Activated naive CD4-positive, alpha-beta T cell treated with anti-CD3 and anti-CD28 coated beads for 36 hours (primary cell): ENCODE measurements at regions of chr17 and their contacts with region 1.

Region 1: DNA sequence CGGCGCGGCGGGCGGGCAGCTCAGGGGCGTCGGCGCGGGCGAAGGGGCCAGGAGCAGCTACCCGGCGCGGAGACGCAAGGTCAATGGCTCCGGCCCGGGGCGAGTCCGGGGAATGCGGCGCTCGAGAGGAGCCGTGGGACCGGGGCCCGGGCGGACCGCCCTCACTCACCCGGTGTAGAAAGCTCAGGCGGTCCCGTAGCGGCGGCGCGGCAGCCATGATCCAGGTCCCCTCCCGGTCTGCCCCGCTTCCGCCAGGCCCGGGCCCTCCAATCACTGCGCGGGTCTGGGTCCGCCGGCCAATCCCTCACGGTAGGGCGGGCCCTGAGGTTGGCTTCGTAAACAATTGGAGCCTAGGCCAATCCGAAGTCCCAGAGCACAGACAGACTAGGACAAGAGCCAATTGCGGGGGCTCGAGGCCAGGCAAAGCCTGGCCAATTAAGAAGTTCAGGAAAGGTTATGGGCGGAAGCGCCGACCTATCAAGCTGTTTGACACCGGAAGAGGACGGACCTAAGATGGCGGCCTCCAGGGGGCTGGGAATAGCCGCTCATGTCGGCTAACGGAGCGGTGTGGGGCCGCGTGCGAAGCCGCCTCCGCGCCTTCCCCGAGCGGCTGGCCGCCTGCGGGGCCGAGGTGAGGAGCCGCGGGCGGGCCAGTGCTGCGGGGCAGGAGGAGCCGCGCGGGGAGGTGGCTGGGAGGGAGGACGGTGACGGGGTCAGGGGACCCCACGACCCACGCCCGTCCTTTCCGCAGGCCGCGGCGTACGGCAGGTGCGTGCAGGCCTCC is at the starts of genes NDUFAF8 and TEPSIN:
- DNase-seq: peak; percentile 98
- H3K4me3 Mint-ChIP-seq: peak within 1 kb of the TSS; percentile 90
- H3K27ac Mint-ChIP-seq: peak within 1 kb of the TSS; percentile 96
- H3K4me1 Mint-ChIP-seq: peaks cover 37% of the 10 kb centered on the region
- H3K27me3 Mint-ChIP-seq: no peaks in the 10 kb centered on the region
- total RNA-seq, gene NDUFAF8: 75.7 to 77.0 TPM
- total RNA-seq, gene TEPSIN: 21.7 to 25.9 TPM

Region 2: DNA sequence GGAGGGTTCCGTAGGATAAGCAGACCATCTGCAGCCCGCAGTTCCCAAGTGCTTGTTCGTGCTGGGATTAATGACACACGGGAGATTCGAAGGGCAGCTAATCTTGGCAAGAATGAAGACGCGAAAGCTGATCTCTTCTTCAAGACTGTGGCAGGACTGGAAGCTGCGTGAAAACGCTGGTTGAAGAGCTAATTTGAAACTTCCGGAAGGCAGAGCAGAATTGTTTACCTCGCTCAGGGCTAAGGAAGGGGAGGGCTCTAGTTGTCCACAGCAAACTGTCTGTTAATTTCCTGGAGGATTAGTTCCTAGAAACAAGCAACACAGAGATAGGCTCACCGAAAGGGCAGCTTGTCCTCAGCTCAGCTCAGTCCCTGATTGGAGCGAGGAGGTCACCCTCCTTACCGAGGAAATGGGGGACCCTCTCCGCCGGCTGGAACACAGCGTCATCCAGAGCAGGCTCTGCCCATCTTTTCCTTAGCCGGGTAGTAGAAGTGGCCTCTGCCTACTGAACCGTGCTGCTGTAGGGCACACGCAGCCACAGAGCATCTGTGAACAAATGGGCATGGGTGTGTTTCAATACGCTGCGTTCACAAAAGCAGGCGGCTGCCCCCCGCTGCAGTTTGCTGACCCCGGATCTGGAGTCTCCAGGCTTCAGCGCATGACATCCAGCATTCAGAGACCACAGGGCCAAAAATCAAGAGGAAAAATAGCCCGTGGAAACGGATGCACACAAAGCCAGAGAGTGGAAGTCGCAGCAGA is 220.8 kb before region 1 on chr17:
- CTCF ChIA-PET with region 1: no interaction called
- intact Hi-C with region 1: loop called (anchors 2 kb)
- DNase-seq: peak; percentile 60
- H3K4me3 Mint-ChIP-seq: peak overlapping the region; percentile 60
- H3K27ac Mint-ChIP-seq: peak overlapping the region; percentile 75
- H3K4me1 Mint-ChIP-seq: peaks cover 12% of the 10 kb centered on the region
- H3K27me3 Mint-ChIP-seq: no peaks in the 10 kb centered on the region

Region 3: GRCh38 chr17:81034779-81035388 is 204.1 kb before region 1 on chr17 and contains the start of gene BAIAP2:
- CTCF ChIA-PET with region 1: no interaction called
- intact Hi-C with region 1: no loop called
- DNase-seq: peak; percentile 95
- H3K4me3 Mint-ChIP-seq: peak within 1 kb of the TSS; percentile 85
- H3K27ac Mint-ChIP-seq: no peak within 1 kb of the TSS
- H3K4me1 Mint-ChIP-seq: peaks cover 15% of the 10 kb centered on the region
- H3K27me3 Mint-ChIP-seq: peaks cover 19% of the 10 kb centered on the region
- total RNA-seq, gene BAIAP2: 3.9 to 4.2 TPM

Region 4: GRCh38 chr17:81101614-81102306 is 137.2 kb before region 1 on chr17:
- CTCF ChIA-PET with region 1: interaction called, 4 read pairs
- intact Hi-C with region 1: loop called (anchors 1 kb)
- DNase-seq: peak; percentile 89
- H3K4me3 Mint-ChIP-seq: no peak overlapping the region
- H3K27ac Mint-ChIP-seq: no peak overlapping the region
- H3K4me1 Mint-ChIP-seq: peaks cover 6% of the 10 kb centered on the region
- H3K27me3 Mint-ChIP-seq: no peaks in the 10 kb centered on the region

Region 5: GRCh38 chr17:81165246-81166032 is 73.6 kb before region 1 on chr17 and contains the start of gene PVALEF:
- CTCF ChIA-PET with region 1: no interaction called
- intact Hi-C with region 1: no loop called
- DNase-seq: no peak
- H3K4me3 Mint-ChIP-seq: no peak within 1 kb of the TSS
- H3K27ac Mint-ChIP-seq: no peak within 1 kb of the TSS
- H3K4me1 Mint-ChIP-seq: peaks cover 1% of the 10 kb centered on the region
- H3K27me3 Mint-ChIP-seq: peaks cover 14% of the 10 kb centered on the region
- total RNA-seq, gene PVALEF: not detected

Region 6: DNA sequence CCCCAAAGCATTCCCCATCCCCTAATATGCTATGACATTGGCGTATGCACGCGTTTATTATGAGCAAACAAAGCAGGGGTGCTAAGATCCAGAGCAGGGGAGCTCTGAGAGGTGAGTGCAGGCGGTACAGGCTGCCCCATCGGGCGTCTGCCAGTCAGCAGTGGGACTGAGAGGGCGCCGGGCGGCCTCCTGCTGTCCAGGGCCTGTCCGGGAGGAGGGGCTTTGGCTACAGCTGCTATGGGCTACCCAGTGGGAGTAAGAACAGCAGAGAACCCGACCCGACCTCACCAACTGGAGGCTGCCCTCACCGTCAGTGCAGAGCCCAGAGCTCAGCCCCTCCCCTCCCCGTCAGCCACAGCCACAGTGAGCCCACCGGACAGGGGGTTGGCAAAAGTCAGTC is 54.5 kb before region 1 on chr17:
- CTCF ChIA-PET with region 1: no interaction called
- intact Hi-C with region 1: no loop called
- DNase-seq: no peak
- H3K4me3 Mint-ChIP-seq: no peak overlapping the region
- H3K27ac Mint-ChIP-seq: no peak overlapping the region
- H3K4me1 Mint-ChIP-seq: no peaks in the 10 kb centered on the region
- H3K27me3 Mint-ChIP-seq: peaks cover 4% of the 10 kb centered on the region

Region 7: GRCh38 chr17:81222906-81223761 is 15.9 kb before region 1 on chr17 and contains the start of gene CEP131:
- CTCF ChIA-PET with region 1: no interaction called
- intact Hi-C with region 1: loop called (anchors 1 kb)
- DNase-seq: peak; percentile 100
- H3K4me3 Mint-ChIP-seq: peak within 1 kb of the TSS; percentile 77
- H3K27ac Mint-ChIP-seq: peak within 1 kb of the TSS; percentile 13
- H3K4me1 Mint-ChIP-seq: peaks cover 16% of the 10 kb centered on the region
- H3K27me3 Mint-ChIP-seq: no peaks in the 10 kb centered on the region
- total RNA-seq, gene CEP131: 9.4 to 9.8 TPM

Region 8: GRCh38 chr17:81484195-81484979 is 245.4 kb after region 1 on chr17:
- CTCF ChIA-PET with region 1: interaction called, 5 read pairs
- intact Hi-C with region 1: loop called (anchors 5 kb)
- DNase-seq: peak; percentile 88
- H3K4me3 Mint-ChIP-seq: peak overlapping the region; percentile 18
- H3K27ac Mint-ChIP-seq: no peak overlapping the region
- H3K4me1 Mint-ChIP-seq: peaks cover 20% of the 10 kb centered on the region
- H3K27me3 Mint-ChIP-seq: peaks cover 21% of the 10 kb centered on the region